Heart right ventricle (tissue), 16 donors: ENCODE measurements at regions of chr2 and their contacts with region 1.

Region 1: DNA sequence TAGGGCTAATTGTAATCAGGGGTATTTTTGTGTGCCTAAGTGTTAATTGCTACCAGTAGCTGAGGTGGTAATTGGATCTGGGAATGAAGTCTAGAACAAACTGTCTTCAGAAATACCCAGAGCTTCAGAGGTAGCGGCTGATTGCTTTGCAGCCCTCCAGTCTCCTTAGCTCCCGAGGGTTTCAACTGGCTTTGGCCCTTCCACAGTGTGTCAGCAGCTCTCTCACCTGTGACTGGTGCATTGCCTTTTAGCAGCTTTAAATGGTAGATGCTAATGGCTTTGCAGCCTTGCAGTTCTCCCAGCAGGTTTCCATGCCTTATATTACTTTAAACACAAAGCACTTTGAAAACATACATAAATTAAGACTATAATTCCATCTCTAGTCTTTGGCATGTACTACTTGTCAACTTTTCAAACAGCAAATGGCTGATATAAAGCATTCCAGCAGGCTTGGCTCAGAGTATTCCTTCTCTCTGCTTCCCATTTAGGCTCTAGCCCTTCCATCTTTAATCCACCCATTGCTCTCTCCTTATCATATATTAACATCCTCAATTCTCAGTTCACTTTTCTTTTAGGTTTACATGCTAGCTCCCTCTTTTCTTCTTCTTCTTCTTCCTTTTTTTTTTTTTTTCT is 156.4 kb upstream of the GALNT13 start:
- DNase-seq: no peak
- ATAC-seq: no peak
- H3K4me3 ChIP-seq: no peak overlapping the region
- H3K27ac ChIP-seq: no peak overlapping the region
- H3K4me1 ChIP-seq: no peaks in the 10 kb centered on the region
- H3K27me3 ChIP-seq: no peaks in the 10 kb centered on the region
- CTCF ChIP-seq: no peak

Region 2: GRCh38 chr2:153668923-153669322 is 46.4 kb before region 1 on chr2:
- intact Hi-C with region 1: loop called in 1 of 10 experiments (anchors 1 kb)
- DNase-seq: no peak
- ATAC-seq: no peak
- H3K4me3 ChIP-seq: no peak overlapping the region
- H3K27ac ChIP-seq: no peak overlapping the region
- H3K4me1 ChIP-seq: no peaks in the 10 kb centered on the region
- H3K27me3 ChIP-seq: no peaks in the 10 kb centered on the region
- CTCF ChIP-seq: no peak